ENCODE measurements at regions of chr11 and their contacts with region 1.

Region 1: GRCh38 chr11:102666331-102666957 is 39.1 kb downstream of the MMP27 start:
- DNase-seq: no peak
- ATAC-seq: peak; percentile 54
- H3K4me3 Mint-ChIP-seq: no peak overlapping the region
- H3K27ac Mint-ChIP-seq: no peak overlapping the region
- H3K4me1 Mint-ChIP-seq: peaks cover 3% of the 10 kb centered on the region
- H3K27me3 Mint-ChIP-seq: no peaks in the 10 kb centered on the region
- CTCF ChIP-seq: no peak

Region 2: DNA sequence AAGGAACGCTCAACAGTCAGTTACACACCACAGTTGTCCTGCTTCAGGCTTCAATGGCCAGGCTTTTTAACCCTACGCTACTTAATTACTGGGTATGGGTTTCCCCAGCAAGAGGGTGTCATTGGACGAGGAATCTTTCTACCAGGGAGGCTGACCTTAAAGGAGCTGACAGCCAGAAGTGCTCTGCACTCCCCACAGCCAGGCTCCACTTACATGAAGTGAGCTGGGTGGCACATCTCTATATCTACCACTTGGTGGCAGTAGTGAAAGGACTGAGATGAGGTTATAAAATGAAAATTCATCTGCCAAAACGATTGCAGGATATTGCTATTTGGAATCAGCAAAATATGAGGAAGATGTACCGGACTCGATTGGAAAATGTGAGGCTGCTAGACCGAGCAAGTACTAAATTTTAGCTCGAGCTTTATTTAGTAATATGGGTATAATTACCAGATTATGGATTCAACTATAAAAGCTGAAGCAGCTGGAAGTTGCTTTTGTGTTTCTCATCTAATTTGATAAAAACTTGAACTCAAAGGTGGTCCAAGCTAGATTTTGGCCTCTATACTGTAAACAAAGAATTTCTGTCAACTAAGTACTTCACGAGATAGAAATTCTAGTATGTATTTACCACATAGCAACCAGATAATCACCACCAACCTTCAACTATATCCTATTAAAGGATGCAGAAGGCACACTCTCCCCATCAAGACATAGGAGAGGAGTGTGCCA is 805.6 kb before region 1 on chr11:
- CTCF ChIA-PET with region 1: interaction called, 13 read pairs
- POLR2A ChIA-PET with region 1: no interaction called
- intact Hi-C with region 1: loop called (anchors 2 kb)
- DNase-seq: no peak
- ATAC-seq: peak; percentile 52
- H3K4me3 Mint-ChIP-seq: no peak overlapping the region
- H3K27ac Mint-ChIP-seq: no peak overlapping the region
- H3K4me1 Mint-ChIP-seq: no peaks in the 10 kb centered on the region
- H3K27me3 Mint-ChIP-seq: peaks cover 12% of the 10 kb centered on the region
- CTCF ChIP-seq: no peak

Region 3: DNA sequence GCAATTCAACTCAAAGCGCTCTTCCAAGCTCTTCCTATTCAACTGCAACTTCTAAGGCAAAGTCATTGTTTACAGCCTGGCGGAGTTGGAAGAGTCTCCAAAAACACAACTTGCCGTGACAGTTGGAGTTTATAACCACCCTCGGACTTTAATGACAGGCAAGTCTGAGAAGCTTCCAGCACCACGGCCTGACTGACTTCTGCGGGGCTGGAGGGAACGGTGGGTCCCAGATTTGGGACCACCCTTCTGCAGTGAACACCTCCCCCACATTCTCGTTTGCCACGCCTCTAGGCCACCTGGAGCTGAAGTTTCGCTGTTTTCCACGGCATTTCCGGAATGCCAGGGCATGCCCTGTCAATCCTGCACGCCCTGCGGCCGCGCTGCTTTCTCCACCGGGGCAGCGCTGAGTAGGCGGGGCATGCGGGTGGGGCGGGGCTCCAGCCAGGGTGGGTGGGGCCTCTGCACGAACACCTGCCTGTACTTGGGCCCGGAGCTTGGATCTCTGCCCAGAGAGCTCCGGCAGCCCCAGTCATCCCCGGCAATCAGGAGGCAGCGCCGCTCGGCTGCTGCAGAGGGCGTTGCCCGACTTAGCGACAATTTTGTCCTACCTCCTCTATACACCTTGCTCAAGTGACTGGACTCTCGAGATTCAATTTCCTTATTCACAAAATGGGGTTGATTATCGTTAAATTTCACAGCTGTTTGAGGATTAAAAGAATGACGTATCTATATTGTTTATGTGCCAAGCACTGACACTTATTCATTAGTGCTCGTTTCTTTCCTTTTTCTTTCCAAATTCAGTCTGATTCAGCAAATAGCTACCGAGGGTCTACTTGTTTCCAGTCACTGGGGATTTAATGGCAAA is 397.9 kb before region 1 on chr11:
- CTCF ChIA-PET with region 1: interaction called, 5 read pairs
- POLR2A ChIA-PET with region 1: no interaction called
- intact Hi-C with region 1: loop called (anchors 5 kb)
- DNase-seq: peak; percentile 54
- ATAC-seq: peak; percentile 100
- H3K4me3 Mint-ChIP-seq: peak overlapping the region; percentile 56
- H3K27ac Mint-ChIP-seq: no peak overlapping the region
- H3K4me1 Mint-ChIP-seq: peaks cover 15% of the 10 kb centered on the region
- H3K27me3 Mint-ChIP-seq: peaks cover 14% of the 10 kb centered on the region
- CTCF ChIP-seq: no peak

Region 4: DNA sequence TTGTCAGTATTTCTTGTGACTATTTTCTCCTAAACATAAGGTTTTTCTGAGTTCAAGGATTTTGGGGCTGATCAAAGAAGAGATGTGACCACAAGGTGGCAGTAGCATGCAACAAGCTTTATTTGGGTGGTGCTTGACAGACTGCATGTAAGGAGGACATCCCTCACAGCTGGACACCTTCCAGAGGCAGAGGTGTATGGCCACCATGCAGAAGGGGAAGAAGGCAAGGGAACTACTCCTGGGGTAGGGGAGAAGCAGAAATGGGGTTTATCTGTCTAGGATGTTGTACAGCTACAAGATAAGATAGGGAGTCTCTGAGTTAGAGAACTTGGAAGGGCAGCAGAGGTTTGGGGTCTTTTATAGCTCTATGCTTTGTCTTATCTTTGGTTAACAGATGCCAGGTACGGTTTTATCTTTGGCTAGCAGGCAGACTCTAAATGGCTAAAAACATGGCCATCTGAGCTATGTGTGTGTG is 324.6 kb before region 1 on chr11:
- CTCF ChIA-PET with region 1: interaction called, 56 read pairs
- POLR2A ChIA-PET with region 1: no interaction called
- intact Hi-C with region 1: loop called (anchors 1 kb)
- DNase-seq: no peak
- ATAC-seq: peak; percentile 37
- H3K4me3 Mint-ChIP-seq: no peak overlapping the region
- H3K27ac Mint-ChIP-seq: peak overlapping the region; percentile 42
- H3K4me1 Mint-ChIP-seq: peaks cover 29% of the 10 kb centered on the region
- H3K27me3 Mint-ChIP-seq: no peaks in the 10 kb centered on the region
- CTCF ChIP-seq: peak; percentile 50

Region 5: DNA sequence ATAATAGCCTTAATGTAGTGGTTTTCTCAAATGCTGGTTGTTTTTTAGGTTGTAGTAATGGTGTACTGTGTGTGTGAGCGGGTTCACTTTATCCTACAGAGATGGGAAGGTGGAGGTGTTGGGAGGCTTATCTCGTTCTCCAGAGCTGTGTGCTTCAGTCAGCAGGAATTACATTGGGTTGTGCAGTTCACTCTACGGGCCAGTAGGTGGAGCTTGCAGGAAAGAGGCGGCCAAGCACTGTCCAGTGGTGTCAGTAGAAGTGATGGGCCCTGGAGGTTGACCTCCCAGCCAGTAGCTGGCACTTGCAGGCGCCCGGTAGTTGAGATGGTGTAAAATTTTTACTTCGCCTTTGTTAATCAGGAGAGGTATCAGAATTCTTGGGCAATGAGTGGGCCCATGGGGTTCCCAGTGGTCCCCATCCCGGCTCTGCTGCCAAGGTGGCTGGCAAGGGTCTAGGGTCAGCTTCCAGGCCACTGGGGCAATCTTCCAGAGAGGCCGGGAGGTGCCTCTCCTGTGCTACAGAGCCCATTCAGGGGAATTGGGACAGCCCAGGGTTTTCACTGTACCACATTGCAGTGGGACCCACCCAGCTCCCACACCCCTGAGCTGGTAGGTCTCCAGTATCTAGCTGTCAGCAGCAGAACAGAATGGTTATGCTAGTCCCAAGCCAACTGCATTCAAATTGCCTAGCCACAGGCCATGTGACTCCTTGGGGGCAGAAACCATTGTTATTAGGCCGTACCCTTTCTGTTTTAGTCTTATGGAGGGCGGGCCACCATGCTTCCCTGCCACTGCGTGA is 275.6 kb before region 1 on chr11:
- CTCF ChIA-PET with region 1: interaction called, 25 read pairs
- POLR2A ChIA-PET with region 1: no interaction called
- intact Hi-C with region 1: loop called (anchors 1 kb)
- DNase-seq: peak; percentile 37
- ATAC-seq: peak; percentile 95
- H3K4me3 Mint-ChIP-seq: no peak overlapping the region
- H3K27ac Mint-ChIP-seq: no peak overlapping the region
- H3K4me1 Mint-ChIP-seq: peaks cover 13% of the 10 kb centered on the region
- H3K27me3 Mint-ChIP-seq: no peaks in the 10 kb centered on the region
- CTCF ChIP-seq: peak; percentile 85

Region 6: DNA sequence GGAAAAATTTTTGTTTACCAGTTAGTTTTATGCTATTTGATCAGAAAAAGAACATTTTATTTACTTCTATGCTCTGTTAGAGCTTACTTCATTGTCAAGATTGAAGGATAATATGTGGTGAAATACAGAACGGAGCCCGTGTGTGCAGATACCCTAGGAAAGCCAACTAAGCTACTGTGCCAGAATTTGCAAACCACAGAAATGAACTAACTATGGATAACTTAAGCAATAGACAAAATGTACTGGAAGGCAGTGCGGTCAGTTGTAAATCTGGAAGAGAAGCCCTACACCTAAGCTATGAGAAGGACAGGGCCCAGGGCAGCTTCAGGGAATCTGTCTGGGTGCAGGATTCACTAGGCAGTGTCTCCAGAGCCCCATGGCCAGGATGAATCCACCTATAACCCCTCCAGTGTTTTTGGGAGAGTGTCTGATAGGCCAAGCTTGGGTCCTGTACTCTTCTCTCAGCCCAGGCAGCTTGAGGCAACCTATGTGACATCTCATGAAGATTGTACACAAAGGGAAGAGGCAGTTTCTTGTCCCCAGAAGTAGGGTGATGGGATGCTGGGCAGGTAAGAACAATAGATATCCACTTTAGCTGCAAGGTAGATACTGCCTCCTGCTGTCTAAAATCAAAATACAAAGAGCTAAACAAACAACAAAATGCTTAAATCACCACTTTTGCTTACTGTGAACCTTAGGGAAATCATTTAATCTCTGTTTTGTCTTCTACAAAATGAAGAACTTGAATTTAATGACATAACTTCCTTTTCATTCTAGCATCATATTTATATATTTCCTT is 147.9 kb before region 1 on chr11:
- CTCF ChIA-PET with region 1: no interaction called
- POLR2A ChIA-PET with region 1: no interaction called
- intact Hi-C with region 1: no loop called
- DNase-seq: no peak
- ATAC-seq: no peak
- H3K4me3 Mint-ChIP-seq: no peak overlapping the region
- H3K27ac Mint-ChIP-seq: no peak overlapping the region
- H3K4me1 Mint-ChIP-seq: peaks cover 22% of the 10 kb centered on the region
- H3K27me3 Mint-ChIP-seq: peaks cover 2% of the 10 kb centered on the region
- CTCF ChIP-seq: no peak

Region 7: DNA sequence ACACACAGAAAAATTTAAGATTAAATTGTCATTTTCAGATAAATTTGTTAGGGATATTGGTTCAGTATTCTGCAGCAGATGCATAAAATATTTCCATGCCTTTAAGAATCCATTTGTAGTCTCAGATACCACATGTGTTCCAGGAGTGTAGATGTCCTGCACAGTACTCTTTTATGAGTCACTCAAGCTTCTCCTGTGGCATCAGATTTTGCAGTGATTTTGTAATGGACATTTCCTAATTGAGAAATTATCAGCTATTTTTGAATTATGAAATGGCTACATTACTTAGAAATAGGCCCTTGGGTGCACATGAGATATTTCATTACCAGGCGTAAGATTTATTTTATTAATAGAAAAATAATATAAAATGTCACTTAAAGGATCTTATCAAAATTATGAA is 158.1 kb after region 1 on chr11:
- CTCF ChIA-PET with region 1: no interaction called
- POLR2A ChIA-PET with region 1: no interaction called
- intact Hi-C with region 1: no loop called
- DNase-seq: no peak
- ATAC-seq: no peak
- H3K4me3 Mint-ChIP-seq: no peak overlapping the region
- H3K27ac Mint-ChIP-seq: no peak overlapping the region
- H3K4me1 Mint-ChIP-seq: no peaks in the 10 kb centered on the region
- H3K27me3 Mint-ChIP-seq: peaks cover 12% of the 10 kb centered on the region
- CTCF ChIP-seq: no peak